Activated CD4-positive, alpha-beta T cell treated with anti-CD3 and anti-CD28 coated beads for 36 hours (primary cell): ENCODE measurements at regions of chr14 and their contacts with region 1.

Region 1: GRCh38 chr14:22010545-22011252 is 337.1 kb upstream of the OR4E1 start:
- DNase-seq: no peak
- ATAC-seq: no peak
- H3K4me3 Mint-ChIP-seq: no peak overlapping the region
- H3K27ac Mint-ChIP-seq: no peak overlapping the region
- H3K4me1 Mint-ChIP-seq: peaks cover 22% of the 10 kb centered on the region
- H3K27me3 Mint-ChIP-seq: no peaks in the 10 kb centered on the region

Region 2: DNA sequence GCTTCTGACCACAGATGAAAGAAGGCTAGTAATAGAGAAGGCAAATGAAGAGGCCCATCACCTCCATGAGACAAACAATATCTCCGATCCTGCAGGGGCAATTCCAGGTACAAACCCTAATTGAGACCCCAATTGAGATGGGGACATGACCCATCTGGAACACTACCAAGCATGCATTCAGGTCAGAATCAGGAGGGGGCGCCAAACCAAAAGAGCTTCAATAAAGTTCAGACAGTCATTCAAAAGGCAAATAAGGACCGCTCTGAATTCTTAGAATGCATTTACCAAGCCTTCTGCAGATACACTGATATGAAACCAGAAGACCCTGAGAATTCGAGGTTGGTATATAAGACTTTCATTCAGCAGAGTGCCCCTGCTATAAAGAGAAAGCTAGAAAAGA is 1252.7 kb before region 1 on chr14:
- CTCF ChIA-PET with region 1: no interaction called
- POLR2A ChIA-PET with region 1: no interaction called
- intact Hi-C with region 1: no loop called
- DNase-seq: peak; percentile 54
- ATAC-seq: no peak
- H3K4me3 Mint-ChIP-seq: no peak overlapping the region
- H3K27ac Mint-ChIP-seq: no peak overlapping the region
- H3K4me1 Mint-ChIP-seq: no peaks in the 10 kb centered on the region
- H3K27me3 Mint-ChIP-seq: no peaks in the 10 kb centered on the region

Region 3: GRCh38 chr14:22026527-22026926 is 15.8 kb after region 1 on chr14:
- CTCF ChIA-PET with region 1: interaction called, 11 read pairs
- POLR2A ChIA-PET with region 1: no interaction called
- intact Hi-C with region 1: no loop called
- DNase-seq: no peak
- ATAC-seq: peak; percentile 42
- H3K4me3 Mint-ChIP-seq: no peak overlapping the region
- H3K27ac Mint-ChIP-seq: no peak overlapping the region
- H3K4me1 Mint-ChIP-seq: peaks cover 4% of the 10 kb centered on the region
- H3K27me3 Mint-ChIP-seq: peaks cover 2% of the 10 kb centered on the region